Heart right ventricle (tissue), 16 donors: ENCODE measurements at regions of chr18 and their contacts with region 1.

Region 1: DNA sequence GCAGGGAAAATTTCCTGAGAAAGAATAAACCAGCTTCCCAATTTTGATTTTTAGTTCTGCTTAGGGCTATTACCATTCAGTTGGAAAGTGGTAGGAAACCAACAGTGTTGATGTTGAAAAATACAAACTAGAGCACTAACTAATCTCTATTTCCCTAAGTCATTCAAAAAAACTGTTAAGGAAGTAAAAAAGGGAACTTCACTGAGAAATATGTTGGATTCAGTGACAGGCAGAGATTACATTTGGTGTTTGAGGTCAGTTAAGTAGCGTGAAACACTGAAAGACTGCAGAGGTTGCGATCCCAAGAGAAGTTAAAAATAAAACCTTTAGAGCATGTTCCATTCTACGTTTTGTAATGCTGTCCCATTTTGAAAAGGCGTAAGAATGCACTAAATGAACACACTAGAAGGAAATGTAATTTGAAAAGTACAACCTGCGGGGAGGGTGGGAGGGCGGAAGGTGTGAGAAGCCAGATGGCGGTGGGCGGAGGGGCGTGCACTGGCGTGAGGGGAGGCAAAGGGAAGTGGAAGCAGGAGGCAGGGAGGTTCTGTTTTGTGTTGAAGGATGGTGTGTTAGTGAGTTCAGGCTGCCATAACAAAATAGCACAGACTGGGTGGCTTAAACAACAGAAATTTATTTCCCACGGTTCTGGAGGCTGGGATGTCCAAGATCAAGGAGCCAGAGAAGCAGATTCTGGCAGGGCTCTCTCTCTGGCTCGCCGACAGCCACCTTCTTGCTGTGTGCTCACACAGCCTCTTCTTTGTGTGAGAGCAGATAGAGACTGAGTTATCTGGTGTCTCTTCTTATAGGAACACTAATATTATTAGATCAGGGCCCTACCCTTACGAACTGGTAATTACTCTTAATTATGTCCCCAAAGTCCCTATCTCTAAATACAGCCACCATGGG is 94.3 kb upstream of the KCTD1 start:
- DNase-seq: no peak
- ATAC-seq: peak in 2 of 8 donors; percentile 10 to 17
- H3K4me3 ChIP-seq: no peak overlapping the region
- H3K27ac ChIP-seq: no peak overlapping the region
- H3K4me1 ChIP-seq: peaks cover 0 to 12% (median 0%) of the 10 kb centered on the region in 9 donors
- H3K27me3 ChIP-seq: no peaks in the 10 kb centered on the region
- CTCF ChIP-seq: no peak

Region 2: GRCh38 chr18:26383454-26384270 is 259.0 kb before region 1 on chr18:
- intact Hi-C with region 1: loop called in 4 of 10 experiments (anchors 5 to 10 kb)
- DNase-seq: no peak
- ATAC-seq: peak in 3 of 8 donors; percentile 47 to 56 (median 49)
- H3K4me3 ChIP-seq: no peak overlapping the region
- H3K27ac ChIP-seq: no peak overlapping the region
- H3K4me1 ChIP-seq: peaks cover 0 to 21% (median 10%) of the 10 kb centered on the region in 9 donors
- H3K27me3 ChIP-seq: no peaks in the 10 kb centered on the region
- CTCF ChIP-seq: peak; percentile 58 to 85 (median 77)

Region 3: DNA sequence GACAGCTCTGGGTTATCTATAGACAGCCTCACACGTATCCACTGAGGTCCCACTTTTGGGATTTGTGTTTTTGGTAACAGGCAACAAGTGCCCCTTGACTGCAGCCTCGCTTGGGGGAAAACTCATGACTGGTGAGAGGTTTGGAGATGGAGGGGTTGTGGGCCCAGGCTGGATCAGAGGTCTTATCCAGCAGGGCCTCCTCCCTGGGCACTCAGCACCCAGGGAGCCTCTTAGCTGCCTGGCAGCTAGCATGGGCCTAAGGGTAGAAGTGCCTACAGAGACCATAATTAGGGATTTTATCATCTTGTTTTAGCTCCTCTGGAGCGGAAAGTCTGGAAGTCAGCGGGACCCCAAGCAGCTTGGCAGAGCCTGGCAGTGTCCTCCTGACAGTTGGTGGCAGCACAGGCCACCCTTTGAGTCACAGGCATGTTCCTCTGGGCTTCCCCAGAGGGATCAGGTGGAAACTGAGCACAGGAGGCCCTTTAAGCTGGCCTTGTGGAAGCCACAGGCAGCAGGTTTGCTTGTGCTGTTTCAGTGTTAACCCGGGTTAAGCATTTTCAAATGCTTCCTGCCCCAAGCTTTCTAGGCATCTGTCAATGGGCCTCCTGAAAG is 237.4 kb before region 1 on chr18:
- intact Hi-C with region 1: loop called in 1 of 10 experiments (anchors 10 kb)
- DNase-seq: peak; percentile 33 to 41
- ATAC-seq: peak; percentile 65 to 90 (median 86)
- H3K4me3 ChIP-seq: no peak overlapping the region
- H3K27ac ChIP-seq: no peak overlapping the region
- H3K4me1 ChIP-seq: no peaks in the 10 kb centered on the region
- H3K27me3 ChIP-seq: no peaks in the 10 kb centered on the region
- CTCF ChIP-seq: peak; percentile 14 to 69 (median 55)

Region 4: GRCh38 chr18:26429535-26430226 is 213.0 kb before region 1 on chr18:
- intact Hi-C with region 1: no loop called
- DNase-seq: no peak
- ATAC-seq: peak in 3 of 8 donors; percentile 35 to 89 (median 62)
- H3K4me3 ChIP-seq: no peak overlapping the region
- H3K27ac ChIP-seq: no peak overlapping the region
- H3K4me1 ChIP-seq: no peaks in the 10 kb centered on the region
- H3K27me3 ChIP-seq: no peaks in the 10 kb centered on the region
- CTCF ChIP-seq: no peak

Region 5: DNA sequence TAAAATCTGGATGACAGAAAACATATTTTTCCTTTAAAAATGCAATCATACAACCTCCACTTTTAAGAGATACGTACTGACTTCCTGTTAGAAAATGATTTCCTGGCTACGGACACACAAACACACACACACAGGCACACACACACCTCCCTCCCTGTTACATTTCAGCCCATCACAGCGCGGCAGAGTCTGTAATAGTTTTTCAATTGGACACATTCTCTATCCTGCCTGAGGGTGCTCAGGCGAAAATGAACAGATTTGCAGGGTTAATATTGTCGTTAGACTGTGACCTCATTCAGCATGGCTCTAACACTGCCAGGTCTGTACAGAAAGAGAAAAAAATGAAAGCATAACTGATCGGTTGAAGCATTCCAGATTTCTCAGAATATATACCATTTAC is 139.3 kb before region 1 on chr18:
- intact Hi-C with region 1: no loop called
- DNase-seq: no peak
- ATAC-seq: no peak
- H3K4me3 ChIP-seq: no peak overlapping the region
- H3K27ac ChIP-seq: no peak overlapping the region
- H3K4me1 ChIP-seq: no peaks in the 10 kb centered on the region
- H3K27me3 ChIP-seq: no peaks in the 10 kb centered on the region
- CTCF ChIP-seq: no peak

Region 6: GRCh38 chr18:26568926-26569665 is 73.6 kb before region 1 on chr18:
- intact Hi-C with region 1: loop called in 1 of 10 experiments (anchors 10 kb)
- DNase-seq: no peak
- ATAC-seq: no peak
- H3K4me3 ChIP-seq: no peak overlapping the region
- H3K27ac ChIP-seq: no peak overlapping the region
- H3K4me1 ChIP-seq: peaks cover 0 to 7% (median 0%) of the 10 kb centered on the region in 9 donors
- H3K27me3 ChIP-seq: peaks cover 0 to 5% (median 0%) of the 10 kb centered on the region in 7 donors
- CTCF ChIP-seq: no peak